ENCODE measurements at regions of chr18 and their contacts with region 1.

Region 1: DNA sequence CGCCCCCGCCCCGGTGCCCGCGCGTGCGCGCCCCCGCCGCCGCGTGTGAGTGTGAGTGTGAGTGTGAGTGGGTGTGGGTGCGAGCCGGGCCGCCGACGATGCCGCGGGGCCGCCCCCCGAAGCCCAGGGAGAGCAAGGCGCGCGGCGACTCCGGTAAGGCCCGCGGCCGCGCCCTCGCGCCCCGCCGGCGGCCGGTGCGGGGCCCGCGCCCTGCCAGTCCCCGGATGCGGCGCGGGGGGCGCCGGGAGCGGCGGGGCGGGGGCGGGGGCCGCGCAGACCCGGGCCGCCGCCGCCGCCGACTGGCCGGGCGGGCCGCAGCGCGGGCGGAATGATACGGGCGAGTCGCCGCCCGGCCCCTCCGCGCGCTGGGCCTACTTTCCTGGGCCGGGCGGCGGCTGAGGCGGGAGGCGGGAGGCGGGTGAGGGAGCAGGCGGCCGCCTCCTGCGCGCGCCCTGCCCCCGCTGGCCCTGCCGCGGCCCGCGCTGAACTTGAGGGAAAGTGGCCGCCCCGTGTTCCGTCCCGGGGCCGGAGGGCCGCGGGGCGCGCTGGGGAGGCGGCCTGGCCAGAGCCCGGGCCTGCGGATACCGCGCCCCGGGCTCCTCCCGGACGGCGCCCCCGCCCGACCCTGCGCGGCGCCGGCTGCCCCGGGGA is at the start of gene ZNF236:
- DNase-seq: peak in 8 of 10 donors; percentile 41 to 77 (median 56)
- H3K4me3 ChIP-seq: peak within 1 kb of the TSS; percentile 74 to 99 (median 92)
- H3K27ac ChIP-seq: peak within 1 kb of the TSS; percentile 87 to 99 (median 95)
- H3K27me3 ChIP-seq: no peaks in the 10 kb centered on the region
- CTCF ChIP-seq: no peak
- total RNA-seq, gene ZNF236: 29.4 to 62.0 (median 40.2) TPM

Region 2: GRCh38 chr18:76564127-76564526 is 258.5 kb before region 1 on chr18:
- intact Hi-C with region 1: no loop called
- DNase-seq: no peak
- H3K4me3 ChIP-seq: no peak overlapping the region
- H3K27ac ChIP-seq: peak overlapping the region in 3 of 59 donors; percentile 11 to 64 (median 59)
- H3K27me3 ChIP-seq: peaks cover 0 to 5% (median 0%) of the 10 kb centered on the region in 45 donors
- CTCF ChIP-seq: no peak

Region 3: DNA sequence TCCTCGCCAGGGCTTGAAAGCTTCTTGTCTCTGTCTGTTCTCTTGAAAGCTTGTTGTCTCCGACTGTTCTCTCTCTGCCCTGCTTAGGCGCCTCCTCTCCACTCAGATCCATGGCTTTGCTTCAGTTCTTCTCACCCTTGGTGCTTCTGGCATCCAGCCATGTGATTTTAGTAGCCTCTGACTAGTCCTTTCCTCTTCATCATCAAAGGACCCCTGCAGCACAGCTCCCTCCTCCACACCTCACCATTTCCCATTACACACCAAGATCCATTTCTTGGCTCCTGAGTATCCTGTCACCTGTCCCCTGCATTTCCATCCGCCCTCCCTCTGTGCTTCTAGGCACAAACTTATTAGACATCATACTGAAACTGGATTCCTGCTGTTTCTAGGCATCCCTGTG is 59.1 kb after region 1 on chr18:
- intact Hi-C with region 1: loop called in 1 of 2 experiments (anchors 2 kb)
- DNase-seq: peak in 1 of 10 donors; percentile 14
- H3K4me3 ChIP-seq: no peak overlapping the region
- H3K27ac ChIP-seq: peak overlapping the region in 52 of 59 donors; percentile 0 to 83 (median 64)
- H3K27me3 ChIP-seq: no peaks in the 10 kb centered on the region
- CTCF ChIP-seq: no peak

Region 4: DNA sequence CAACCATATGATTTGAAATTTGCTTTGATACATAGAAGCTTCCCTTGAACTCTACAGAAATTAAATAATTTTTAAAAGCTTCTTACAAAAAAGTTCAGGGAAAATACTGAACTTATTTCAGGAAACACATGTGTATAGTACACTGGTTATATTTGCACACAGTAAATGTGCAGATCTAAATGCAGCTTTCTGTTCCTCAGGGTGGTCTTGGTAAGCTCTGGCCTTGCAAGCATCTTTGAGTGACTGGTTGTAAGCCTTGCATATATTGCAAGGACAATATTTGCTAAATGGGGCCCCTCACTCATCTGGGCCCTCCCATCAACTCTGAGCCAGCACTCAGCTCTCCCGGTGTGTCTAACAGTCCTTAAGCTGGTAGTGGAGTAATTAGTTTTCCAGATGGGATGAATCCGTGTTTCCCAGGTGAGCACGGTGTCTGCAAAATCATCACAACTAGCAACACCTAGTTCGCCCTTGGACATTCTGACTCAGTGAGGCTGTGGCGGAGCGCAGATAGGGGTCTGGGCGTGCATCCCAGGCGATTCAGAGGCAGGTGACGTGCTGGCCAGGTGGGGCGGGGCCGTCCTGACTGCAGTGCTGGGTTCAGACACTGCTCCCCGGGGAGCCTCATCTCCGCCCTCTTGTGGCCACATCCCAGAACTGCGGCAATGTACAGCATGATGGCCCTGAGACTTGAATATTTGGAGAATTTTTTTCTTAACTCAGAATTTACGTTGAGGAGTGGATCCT is 160.4 kb after region 1 on chr18:
- intact Hi-C with region 1: loop called in 1 of 2 experiments (anchors 5 kb)
- DNase-seq: peak; percentile 77 to 88 (median 82)
- H3K4me3 ChIP-seq: peak overlapping the region in 12 of 59 donors; percentile 18 to 42 (median 34)
- H3K27ac ChIP-seq: peak overlapping the region in 40 of 59 donors; percentile 6 to 93 (median 62)
- H3K27me3 ChIP-seq: no peaks in the 10 kb centered on the region
- CTCF ChIP-seq: peak; percentile 79 to 96 (median 88)